ENCODE measurements at regions of chr2 and their contacts with region 1.

Region 1: DNA sequence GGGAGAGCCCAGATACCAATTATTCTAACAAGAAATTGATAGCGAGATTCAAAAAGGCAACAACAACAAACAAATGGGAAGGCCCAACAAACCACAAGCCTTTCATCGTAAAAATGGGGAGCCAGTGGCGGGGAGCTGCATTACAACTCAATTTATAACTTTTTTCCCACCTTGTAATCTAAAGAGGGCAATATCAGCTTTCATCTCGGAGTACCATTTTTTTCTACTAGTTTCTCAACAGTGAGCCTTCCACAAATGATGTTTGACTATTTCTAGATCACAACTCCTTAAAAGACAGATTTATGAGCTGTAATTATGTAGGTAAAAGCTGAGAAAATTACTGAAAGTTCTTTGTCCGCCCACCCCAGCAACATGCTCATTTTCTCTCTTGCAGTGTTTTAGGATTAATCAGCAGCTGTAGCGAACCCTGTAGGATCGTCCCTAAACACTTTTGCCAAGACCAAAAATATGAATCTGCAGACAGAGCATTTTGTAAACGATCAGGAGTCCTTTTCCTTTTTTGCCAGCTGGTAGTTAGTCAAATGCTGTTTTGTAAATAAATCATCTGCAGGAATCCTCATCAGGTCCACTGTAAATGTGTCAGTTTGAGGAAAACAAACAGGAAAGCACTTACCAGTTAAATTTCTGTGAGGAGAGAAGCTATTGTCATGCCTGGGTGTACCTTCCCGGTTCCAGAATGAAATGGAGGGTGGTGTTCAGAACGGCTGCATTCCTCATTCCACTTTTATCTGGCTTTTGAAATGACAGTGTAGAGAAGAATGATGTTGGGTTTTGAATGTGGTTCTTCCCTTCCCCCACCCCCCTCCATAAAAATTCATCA is 53.2 kb downstream of the EEF1B2 start:
- DNase-seq: peak; percentile 43
- H3K4me3 ChIP-seq: peak overlapping the region; percentile 21 to 32 (median 24)
- H3K27ac ChIP-seq: peak overlapping the region; percentile 28
- H3K4me1 ChIP-seq: peaks cover 30% of the 10 kb centered on the region
- H3K27me3 ChIP-seq: no peaks in the 10 kb centered on the region
- CTCF ChIP-seq: no peak

Region 2: DNA sequence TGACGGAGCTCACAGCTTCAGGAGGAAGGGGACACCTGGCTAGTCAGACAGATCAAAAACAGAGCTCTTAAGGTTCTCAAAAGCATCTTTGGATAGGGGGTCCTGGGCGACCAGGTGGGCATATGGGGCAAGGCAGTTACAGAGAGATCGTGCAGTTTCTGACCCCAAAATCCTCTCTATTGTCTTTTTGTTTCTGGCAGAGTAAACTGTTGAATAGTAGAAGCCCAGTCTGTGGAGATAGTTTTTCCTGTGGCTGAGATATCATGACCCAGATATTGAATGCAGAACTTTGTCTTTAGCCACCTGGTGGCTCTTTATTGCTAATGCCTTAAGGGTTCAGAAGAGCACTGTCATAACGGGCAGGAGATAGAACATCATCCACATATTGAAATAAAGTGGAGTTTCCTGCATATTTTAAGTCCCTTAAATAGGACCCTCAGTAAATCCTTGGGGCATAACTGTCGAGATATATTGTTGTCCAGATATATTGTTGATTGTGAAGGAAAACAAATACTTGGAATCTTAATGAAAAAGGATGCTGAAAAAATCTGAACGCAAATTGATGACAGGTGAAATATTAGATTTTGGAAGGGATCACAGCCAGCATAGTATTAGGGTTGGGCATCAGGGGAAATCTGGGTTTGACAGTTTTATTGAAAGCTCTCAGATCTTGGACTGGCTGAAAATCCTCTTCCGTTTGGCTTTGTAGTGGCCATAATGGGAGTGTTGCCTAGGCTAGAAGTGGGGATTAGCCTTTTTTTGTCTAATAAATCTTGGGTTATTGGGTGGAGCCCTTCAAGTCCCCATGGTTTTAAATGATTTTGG is 47.5 kb after region 1 on chr2:
- CTCF ChIA-PET with region 1: no interaction called
- dilution Hi-C with region 1: loop called (anchors 5 kb)
- in situ Hi-C with region 1: no loop called
- intact Hi-C with region 1: no loop called
- DNase-seq: peak; percentile 39
- H3K4me3 ChIP-seq: no peak overlapping the region
- H3K27ac ChIP-seq: no peak overlapping the region
- H3K4me1 ChIP-seq: no peaks in the 10 kb centered on the region
- H3K27me3 ChIP-seq: peaks cover 42% of the 10 kb centered on the region
- CTCF ChIP-seq: peak; percentile 67 to 68